Cardiac septum (tissue), 1 donor: ENCODE measurements at regions of chr2 and their contacts with region 1.

Region 1: DNA sequence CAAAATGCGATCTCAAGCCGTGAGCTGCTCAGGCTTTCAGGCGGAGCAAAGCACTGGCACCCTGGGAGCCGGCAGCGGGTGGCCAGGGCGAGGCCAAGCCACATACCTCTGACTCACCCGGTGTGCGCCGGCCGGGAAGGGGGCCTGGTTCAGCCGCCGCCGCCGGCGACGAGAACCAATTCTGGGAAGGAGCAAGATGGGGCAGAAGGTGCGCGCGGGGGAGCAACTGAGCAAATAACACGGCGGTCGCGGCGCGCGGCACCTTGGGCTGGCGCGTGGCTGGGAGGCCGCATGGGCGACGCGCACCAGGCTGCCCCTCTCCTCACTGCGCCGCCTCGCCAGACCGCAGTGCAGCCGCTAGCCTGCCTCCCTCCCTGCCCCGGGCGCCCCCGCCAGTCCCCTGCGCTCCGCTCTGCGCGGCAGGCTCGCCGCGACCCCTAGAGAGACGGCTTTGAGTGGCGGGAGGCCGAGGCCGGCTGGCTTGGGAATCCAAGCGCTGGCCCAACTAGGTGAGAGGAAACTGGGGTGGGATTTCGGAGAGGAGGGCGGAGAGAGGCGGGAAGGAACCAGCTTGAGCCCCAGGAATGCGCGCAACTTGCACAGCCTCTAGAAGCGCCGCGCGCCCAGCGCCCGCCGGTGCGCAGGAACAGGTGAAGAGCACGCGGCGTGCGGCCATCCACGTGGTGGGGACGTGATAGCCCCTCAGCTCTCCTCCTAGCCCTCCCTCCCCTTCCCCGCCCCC is 3.2 kb downstream of the NRP2 start:
- DNase-seq: no peak

Region 2: GRCh38 chr2:204260162-204260877 is 1425.2 kb before region 1 on chr2:
- intact Hi-C with region 1: loop called (anchors 5 kb)
- DNase-seq: no peak

Region 3: GRCh38 chr2:205706769-205707381 is 21.4 kb after region 1 on chr2:
- intact Hi-C with region 1: loop called (anchors 2 kb)
- DNase-seq: no peak

Region 4: GRCh38 chr2:205754924-205755321 is 69.4 kb after region 1 on chr2:
- intact Hi-C with region 1: loop called (anchors 5 kb)
- DNase-seq: no peak

Region 5: GRCh38 chr2:205808486-205809121 is 123.1 kb after region 1 on chr2:
- intact Hi-C with region 1: no loop called
- DNase-seq: no peak